ENCODE measurements at regions of chr1 and their contacts with region 1.

Region 1: GRCh38 chr1:38578271-38578951 is 281.2 kb downstream of the RRAGC start:
- DNase-seq: peak in 2 of 10 donors; percentile 24 to 74

Region 2: GRCh38 chr1:38046884-38047602 is 531.4 kb before region 1 on chr1:
- intact Hi-C with region 1: loop called (anchors 10 kb)
- DNase-seq: peak; percentile 78 to 98 (median 91)

Region 3: GRCh38 chr1:38489844-38490270 is 88.6 kb before region 1 on chr1:
- intact Hi-C with region 1: loop called (anchors 10 kb)
- DNase-seq: peak in 5 of 10 donors; percentile 11 to 77 (median 46)